ENCODE measurements at regions of chr10 and their contacts with region 1.

Region 1: GRCh38 chr10:11986593-11987216 is 55.9 kb downstream of the UPF2 start:
- DNase-seq: peak; percentile 48
- ATAC-seq: peak; percentile 86
- H3K4me3 ChIP-seq: no peak overlapping the region
- H3K27ac ChIP-seq: no peak overlapping the region
- H3K4me1 ChIP-seq: no peaks in the 10 kb centered on the region
- H3K27me3 ChIP-seq: no peaks in the 10 kb centered on the region
- CTCF ChIP-seq: peak; percentile 74 to 86 (median 76)
- EP300 ChIP-seq: no peak
- POLR2A ChIP-seq: no peak
- RAD21 ChIP-seq: peak; percentile 89

Region 2: GRCh38 chr10:11782793-11783557 is 203.7 kb before region 1 on chr10:
- CTCF ChIA-PET with region 1: interaction called, 36 read pairs
- POLR2A ChIA-PET with region 1: no interaction called
- RAD21 ChIA-PET with region 1: interaction called, 9 read pairs
- SMC1A ChIA-PET with region 1: interaction called, 12 read pairs
- in situ Hi-C with region 1: no loop called
- intact Hi-C with region 1: loop called (anchors 1 kb)
- DNase-seq: peak; percentile 35
- ATAC-seq: peak; percentile 83
- H3K4me3 ChIP-seq: no peak overlapping the region
- H3K27ac ChIP-seq: no peak overlapping the region
- H3K4me1 ChIP-seq: no peaks in the 10 kb centered on the region
- H3K27me3 ChIP-seq: no peaks in the 10 kb centered on the region
- CTCF ChIP-seq: peak; percentile 49 to 72 (median 60); a peak in 5 of 6 replicates
- EP300 ChIP-seq: no peak
- POLR2A ChIP-seq: no peak
- RAD21 ChIP-seq: peak; percentile 51

Region 3: GRCh38 chr10:11793762-11794479 is 192.8 kb before region 1 on chr10:
- CTCF ChIA-PET with region 1: interaction called, 27 read pairs
- POLR2A ChIA-PET with region 1: no interaction called
- RAD21 ChIA-PET with region 1: interaction called, 5 read pairs
- SMC1A ChIA-PET with region 1: interaction called, 11 read pairs
- in situ Hi-C with region 1: loop called (anchors 5 kb)
- intact Hi-C with region 1: no loop called
- DNase-seq: no peak
- ATAC-seq: no peak
- H3K4me3 ChIP-seq: no peak overlapping the region
- H3K27ac ChIP-seq: no peak overlapping the region
- H3K4me1 ChIP-seq: no peaks in the 10 kb centered on the region
- H3K27me3 ChIP-seq: no peaks in the 10 kb centered on the region; a peak in 1 of 4 replicates
- CTCF ChIP-seq: no peak
- EP300 ChIP-seq: no peak
- POLR2A ChIP-seq: no peak
- RAD21 ChIP-seq: no peak

Region 4: GRCh38 chr10:11798845-11799735 is 187.6 kb before region 1 on chr10:
- CTCF ChIA-PET with region 1: interaction called, 27 read pairs
- POLR2A ChIA-PET with region 1: no interaction called
- RAD21 ChIA-PET with region 1: interaction called, 4 read pairs
- SMC1A ChIA-PET with region 1: no interaction called
- in situ Hi-C with region 1: loop called (anchors 5 kb)
- intact Hi-C with region 1: no loop called
- DNase-seq: no peak
- ATAC-seq: no peak
- H3K4me3 ChIP-seq: no peak overlapping the region
- H3K27ac ChIP-seq: no peak overlapping the region
- H3K4me1 ChIP-seq: no peaks in the 10 kb centered on the region
- H3K27me3 ChIP-seq: no peaks in the 10 kb centered on the region
- CTCF ChIP-seq: no peak
- EP300 ChIP-seq: no peak
- POLR2A ChIP-seq: no peak
- RAD21 ChIP-seq: no peak

Region 5: GRCh38 chr10:11819030-11819429 is 167.7 kb before region 1 on chr10:
- CTCF ChIA-PET with region 1: interaction called, 13 read pairs
- POLR2A ChIA-PET with region 1: no interaction called
- RAD21 ChIA-PET with region 1: interaction called, 3 read pairs
- SMC1A ChIA-PET with region 1: interaction called, 7 read pairs
- in situ Hi-C with region 1: no loop called
- intact Hi-C with region 1: loop called (anchors 1 kb)
- DNase-seq: no peak
- ATAC-seq: no peak
- H3K4me3 ChIP-seq: no peak overlapping the region
- H3K27ac ChIP-seq: no peak overlapping the region
- H3K4me1 ChIP-seq: no peaks in the 10 kb centered on the region
- H3K27me3 ChIP-seq: peaks cover 0 to 4% of the 10 kb centered on the region in 2 experiments; a peak in 2 of 4 replicates
- CTCF ChIP-seq: no peak
- EP300 ChIP-seq: no peak
- POLR2A ChIP-seq: no peak
- RAD21 ChIP-seq: no peak

Region 6: GRCh38 chr10:11921800-11922392 is 64.8 kb before region 1 on chr10:
- CTCF ChIA-PET with region 1: no interaction called
- POLR2A ChIA-PET with region 1: no interaction called
- RAD21 ChIA-PET with region 1: no interaction called
- SMC1A ChIA-PET with region 1: no interaction called
- in situ Hi-C with region 1: no loop called
- intact Hi-C with region 1: no loop called
- DNase-seq: no peak
- ATAC-seq: no peak
- H3K4me3 ChIP-seq: no peak overlapping the region
- H3K27ac ChIP-seq: no peak overlapping the region
- H3K4me1 ChIP-seq: no peaks in the 10 kb centered on the region
- H3K27me3 ChIP-seq: no peaks in the 10 kb centered on the region
- CTCF ChIP-seq: no peak
- EP300 ChIP-seq: no peak
- POLR2A ChIP-seq: no peak
- RAD21 ChIP-seq: no peak

Region 7: DNA sequence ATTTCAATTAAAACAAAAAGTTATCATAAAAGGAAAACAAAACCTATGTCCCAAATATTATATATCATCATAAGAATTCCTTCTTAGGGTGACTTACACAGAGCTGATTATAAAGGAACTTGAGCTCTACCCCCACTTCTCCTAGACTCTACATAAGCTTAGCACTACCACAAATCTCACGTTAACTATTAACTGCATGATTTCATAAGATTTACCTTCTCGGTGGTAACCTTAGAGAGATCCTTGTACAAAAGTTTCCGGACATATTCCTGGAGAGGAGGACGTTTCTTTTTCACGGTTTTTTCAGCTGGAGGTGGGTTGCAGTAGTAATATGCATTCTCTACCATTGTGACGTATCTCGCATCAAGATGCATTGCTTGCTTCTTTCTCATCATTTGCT is 27.7 kb before region 1 on chr10:
- CTCF ChIA-PET with region 1: interaction called, 10 read pairs
- POLR2A ChIA-PET with region 1: no interaction called
- RAD21 ChIA-PET with region 1: no interaction called
- SMC1A ChIA-PET with region 1: interaction called, 3 read pairs
- in situ Hi-C with region 1: no loop called
- intact Hi-C with region 1: no loop called
- DNase-seq: no peak
- ATAC-seq: no peak
- H3K4me3 ChIP-seq: no peak overlapping the region
- H3K27ac ChIP-seq: no peak overlapping the region
- H3K4me1 ChIP-seq: no peaks in the 10 kb centered on the region
- H3K27me3 ChIP-seq: no peaks in the 10 kb centered on the region
- CTCF ChIP-seq: no peak
- EP300 ChIP-seq: no peak
- POLR2A ChIP-seq: no peak
- RAD21 ChIP-seq: no peak

Region 8: GRCh38 chr10:12121673-12122072 is 135.0 kb after region 1 on chr10:
- CTCF ChIA-PET with region 1: interaction called, 4 read pairs
- POLR2A ChIA-PET with region 1: interaction called, 5 read pairs
- RAD21 ChIA-PET with region 1: interaction called, 4 read pairs
- SMC1A ChIA-PET with region 1: no interaction called
- in situ Hi-C with region 1: no loop called
- intact Hi-C with region 1: loop called (anchors 5 kb)
- DNase-seq: peak; percentile 62
- ATAC-seq: peak; percentile 72
- H3K4me3 ChIP-seq: peak overlapping the region; percentile 19; the same call in 1 of the 2 replicates
- H3K27ac ChIP-seq: peak overlapping the region; percentile 87
- H3K4me1 ChIP-seq: peaks cover 22% of the 10 kb centered on the region
- H3K27me3 ChIP-seq: no peaks in the 10 kb centered on the region
- CTCF ChIP-seq: no peak
- EP300 ChIP-seq: no peak; a peak in 2 of 4 replicates
- POLR2A ChIP-seq: no peak
- RAD21 ChIP-seq: no peak

Region 9: DNA sequence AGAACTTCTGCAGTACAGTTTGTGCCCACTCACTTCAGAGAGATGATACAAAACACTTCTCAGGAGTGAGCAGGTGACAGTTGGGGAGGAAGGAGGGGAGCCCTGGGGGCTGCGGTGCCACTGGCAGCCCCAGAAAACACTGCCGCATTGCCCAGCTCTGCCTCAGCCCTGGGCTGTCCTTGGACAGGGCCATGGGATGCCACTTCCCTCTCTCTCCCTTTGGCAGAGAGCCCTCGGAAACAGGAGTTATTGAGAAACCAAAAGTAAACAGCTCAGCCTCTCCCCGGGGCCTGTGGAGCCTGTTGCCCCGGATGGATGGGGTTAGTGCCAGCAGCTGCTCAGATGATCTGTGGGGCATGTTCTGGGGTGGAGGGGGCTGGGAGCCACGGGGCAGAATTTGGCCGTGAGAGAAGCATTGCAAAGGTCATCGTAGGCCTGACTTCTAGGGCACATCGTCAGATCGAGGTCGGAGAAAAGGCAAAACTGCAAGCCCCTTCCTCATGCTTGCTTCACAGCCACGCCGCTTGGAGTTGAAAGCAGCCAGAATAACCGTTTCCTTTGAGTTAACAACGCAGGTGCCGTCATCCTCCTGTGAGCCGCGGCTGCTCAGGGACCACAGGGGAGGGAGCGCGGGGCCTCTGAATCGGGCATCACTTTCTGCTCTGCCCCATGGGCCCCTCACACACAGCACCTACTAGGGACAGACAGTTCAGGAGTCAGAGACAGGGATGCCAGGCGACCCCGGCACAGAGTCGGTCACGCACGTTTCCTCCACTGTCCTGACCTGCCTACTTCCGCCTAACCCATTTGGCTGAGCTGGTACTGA is 619.1 kb after region 1 on chr10:
- CTCF ChIA-PET with region 1: no interaction called
- POLR2A ChIA-PET with region 1: no interaction called
- RAD21 ChIA-PET with region 1: no interaction called
- SMC1A ChIA-PET with region 1: no interaction called
- in situ Hi-C with region 1: no loop called
- intact Hi-C with region 1: no loop called
- DNase-seq: no peak
- ATAC-seq: peak; percentile 92
- H3K4me3 ChIP-seq: peak overlapping the region; percentile 62
- H3K27ac ChIP-seq: peak overlapping the region; percentile 71
- H3K4me1 ChIP-seq: peaks cover 14% of the 10 kb centered on the region
- H3K27me3 ChIP-seq: no peaks in the 10 kb centered on the region
- CTCF ChIP-seq: no peak
- EP300 ChIP-seq: no peak
- POLR2A ChIP-seq: peak; percentile 59
- RAD21 ChIP-seq: no peak

Measured in GM12878 (cell line).